HepG2 (cell line): ENCODE measurements at regions of chr9 and their contacts with region 1.

Region 1: GRCh38 chr9:81174030-81174429 is 515.3 kb downstream of the TLE1 start:
- DNase-seq: peak; percentile 7
- ATAC-seq: no peak
- H3K4me3 ChIP-seq: no peak overlapping the region
- H3K27ac ChIP-seq: no peak overlapping the region
- H3K4me1 ChIP-seq: no peaks in the 10 kb centered on the region
- H3K27me3 ChIP-seq: no peaks in the 10 kb centered on the region; a peak in 1 of 5 replicates
- CTCF ChIP-seq: no peak
- EP300 ChIP-seq: no peak
- POLR2A ChIP-seq: no peak
- RAD21 ChIP-seq: no peak

Region 2: DNA sequence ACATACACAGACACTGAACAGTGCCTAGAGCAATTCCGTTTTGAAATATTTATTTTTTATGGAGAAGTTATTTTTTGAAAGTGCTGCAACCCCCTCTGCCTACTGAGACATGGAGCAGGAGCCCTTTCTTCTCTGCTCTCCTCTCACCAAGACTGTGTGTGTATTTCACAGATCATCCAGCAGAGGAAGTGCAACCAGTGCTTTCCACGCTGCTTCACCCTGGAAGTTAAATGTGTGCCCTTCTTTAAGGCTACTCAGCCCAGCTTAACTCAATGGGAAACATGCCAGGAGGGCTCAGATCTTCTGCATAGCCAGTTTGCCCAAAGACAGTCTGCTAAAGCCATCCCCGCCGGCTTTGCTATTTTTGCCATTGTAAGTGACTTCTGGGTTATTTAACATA is 91.0 kb before region 1 on chr9:
- CTCF ChIA-PET with region 1: no interaction called
- POLR2A ChIA-PET with region 1: no interaction called
- in situ Hi-C with region 1: no loop called
- intact Hi-C with region 1: no loop called
- DNase-seq: no peak
- ATAC-seq: no peak
- H3K4me3 ChIP-seq: no peak overlapping the region
- H3K27ac ChIP-seq: no peak overlapping the region
- H3K4me1 ChIP-seq: no peaks in the 10 kb centered on the region
- H3K27me3 ChIP-seq: no peaks in the 10 kb centered on the region
- CTCF ChIP-seq: no peak
- EP300 ChIP-seq: no peak
- POLR2A ChIP-seq: no peak
- RAD21 ChIP-seq: no peak

Region 3: DNA sequence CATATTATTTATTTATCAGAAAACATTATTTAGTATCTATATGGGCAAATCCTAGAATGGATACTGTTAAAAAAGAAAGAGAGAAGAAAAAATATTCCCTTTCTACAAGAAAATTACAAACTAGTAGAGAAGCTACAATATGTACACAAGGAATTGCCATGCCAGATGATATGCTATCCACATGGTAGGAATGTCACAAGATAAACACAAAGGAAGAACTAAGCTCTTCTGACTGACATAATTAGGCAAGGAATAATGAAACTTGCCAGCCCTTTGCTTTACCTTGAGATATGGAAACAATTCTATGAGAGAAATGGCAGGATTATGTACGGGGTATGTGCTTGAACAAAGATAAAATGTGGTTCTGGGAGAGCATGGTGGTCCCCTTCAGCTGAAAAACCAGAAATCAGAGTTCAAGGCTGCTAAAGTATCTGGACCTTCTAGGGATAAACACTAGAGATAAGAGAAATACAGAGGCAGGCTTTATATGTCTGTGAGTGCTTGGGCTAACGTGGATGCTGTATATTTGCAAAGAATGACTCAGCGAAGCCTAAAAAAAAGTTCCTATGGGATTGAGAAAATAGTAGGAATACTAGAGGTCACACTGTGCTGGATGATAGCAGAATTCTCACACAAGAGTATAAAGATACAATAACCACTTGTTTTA is 63.7 kb after region 1 on chr9:
- CTCF ChIA-PET with region 1: no interaction called
- POLR2A ChIA-PET with region 1: no interaction called
- in situ Hi-C with region 1: no loop called
- intact Hi-C with region 1: loop called (anchors 10 kb)
- DNase-seq: peak; percentile 94
- ATAC-seq: peak; percentile 99
- H3K4me3 ChIP-seq: 0 out of 6 replicates have a peak overlapping the region, but pooled peaks of 1 of the 3 experiments have one; percentile 30
- H3K27ac ChIP-seq: peak overlapping the region; percentile 70
- H3K4me1 ChIP-seq: peaks cover 46% of the 10 kb centered on the region
- H3K27me3 ChIP-seq: no peaks in the 10 kb centered on the region
- CTCF ChIP-seq: no peak
- EP300 ChIP-seq: peak; percentile 61 to 83; a peak in 2 of 4 replicates
- POLR2A ChIP-seq: no peak
- RAD21 ChIP-seq: no peak

Region 4: DNA sequence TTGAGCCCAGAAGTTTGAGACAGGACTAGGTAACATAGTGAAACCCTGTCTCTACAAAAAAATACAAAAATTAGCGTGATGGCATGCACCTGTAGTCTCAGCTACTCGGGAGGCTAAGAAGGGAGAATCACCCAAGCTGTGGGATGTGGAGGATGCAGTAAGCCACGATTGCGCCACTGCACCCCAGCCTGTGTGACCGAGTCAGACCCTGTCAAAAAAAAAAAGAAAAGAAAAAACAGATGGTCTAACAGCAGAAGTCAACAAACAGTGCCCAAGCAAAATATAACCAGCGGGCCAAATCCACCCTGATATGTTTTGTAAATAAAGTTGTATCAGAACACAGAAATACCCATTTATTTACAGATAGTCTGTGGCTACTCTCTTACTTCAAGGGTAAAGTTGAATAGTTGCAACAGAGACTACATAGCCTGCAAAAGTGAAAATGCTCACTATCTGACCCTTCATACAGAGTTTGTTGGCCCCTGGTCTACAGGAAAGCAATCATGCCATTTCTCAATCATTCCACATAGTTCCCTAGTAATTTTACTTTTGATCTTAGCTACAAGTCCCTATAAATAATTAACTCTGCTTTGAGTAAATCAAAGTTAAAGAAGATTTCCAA is 131.6 kb after region 1 on chr9:
- CTCF ChIA-PET with region 1: no interaction called
- POLR2A ChIA-PET with region 1: no interaction called
- in situ Hi-C with region 1: no loop called
- intact Hi-C with region 1: loop called (anchors 10 kb)
- DNase-seq: peak; percentile 45
- ATAC-seq: peak; percentile 86
- H3K4me3 ChIP-seq: no peak overlapping the region
- H3K27ac ChIP-seq: no peak overlapping the region
- H3K4me1 ChIP-seq: peaks cover 14% of the 10 kb centered on the region
- H3K27me3 ChIP-seq: no peaks in the 10 kb centered on the region
- CTCF ChIP-seq: no peak
- EP300 ChIP-seq: no peak
- POLR2A ChIP-seq: no peak
- RAD21 ChIP-seq: no peak